H1 (cell line): ENCODE measurements at regions of chr5 and their contacts with region 1.

Region 1: DNA sequence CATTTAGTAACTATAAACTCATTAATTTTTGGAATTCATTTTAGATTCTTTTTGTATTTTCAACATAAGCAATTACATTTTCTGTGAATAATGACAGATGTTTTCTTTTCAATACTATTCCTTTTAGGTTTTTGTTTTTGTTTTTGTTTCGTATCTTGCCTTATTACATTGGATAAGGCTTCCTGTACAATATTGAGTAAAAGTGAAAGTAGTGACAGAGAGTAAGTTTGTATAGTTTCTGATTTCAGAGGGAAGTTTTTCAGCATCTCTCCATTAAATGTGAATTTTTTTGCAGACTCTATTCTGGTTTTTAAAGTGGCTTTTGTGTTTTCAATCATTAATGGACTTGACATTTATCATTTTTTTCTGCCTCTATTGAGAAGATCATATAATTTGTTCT is 12.8 kb upstream of the CAMK4 start:
- DNase-seq: no peak
- H3K4me3 ChIP-seq: no peak overlapping the region
- H3K27ac ChIP-seq: no peak overlapping the region
- H3K4me1 ChIP-seq: peaks cover 0 to 6% (median 3%) of the 10 kb centered on the region in 4 experiments; a peak in 4 of 7 replicates
- H3K27me3 ChIP-seq: no peaks in the 10 kb centered on the region
- CTCF ChIP-seq: no peak
- EP300 ChIP-seq: no peak
- POLR2A ChIP-seq: no peak
- RAD21 ChIP-seq: no peak

Region 2: GRCh38 chr5:111144352-111144930 is 66.9 kb before region 1 on chr5:
- CTCF ChIA-PET with region 1: no interaction called
- POLR2A ChIA-PET with region 1: no interaction called
- DNase-seq: no peak
- H3K4me3 ChIP-seq: no peak overlapping the region
- H3K27ac ChIP-seq: no peak overlapping the region
- H3K4me1 ChIP-seq: no peaks in the 10 kb centered on the region
- H3K27me3 ChIP-seq: no peaks in the 10 kb centered on the region
- CTCF ChIP-seq: no peak
- EP300 ChIP-seq: no peak
- POLR2A ChIP-seq: no peak
- RAD21 ChIP-seq: no peak

Region 3: GRCh38 chr5:111158105-111158744 is 53.1 kb before region 1 on chr5:
- CTCF ChIA-PET with region 1: no interaction called
- POLR2A ChIA-PET with region 1: no interaction called
- DNase-seq: peak; percentile 43 to 90
- H3K4me3 ChIP-seq: no peak overlapping the region
- H3K27ac ChIP-seq: no peak overlapping the region
- H3K4me1 ChIP-seq: no peaks in the 10 kb centered on the region
- H3K27me3 ChIP-seq: no peaks in the 10 kb centered on the region
- CTCF ChIP-seq: peak; percentile 53 to 98 (median 90)
- EP300 ChIP-seq: no peak
- POLR2A ChIP-seq: no peak
- RAD21 ChIP-seq: peak; percentile 96 to 99

Region 4: GRCh38 chr5:111223889-111224563 is 12.7 kb after region 1 on chr5 and contains the start of gene CAMK4:
- CTCF ChIA-PET with region 1: interaction called, 3 read pairs
- POLR2A ChIA-PET with region 1: interaction called, 12 read pairs
- DNase-seq: peak; percentile 38 to 80
- H3K4me3 ChIP-seq: peak within 1 kb of the TSS; percentile 77 to 100 (median 86)
- H3K27ac ChIP-seq: no peak within 1 kb of the TSS; the same call in 1 of the 2 replicates
- H3K4me1 ChIP-seq: peaks cover 0 to 7% (median 2%) of the 10 kb centered on the region in 4 experiments; a peak in 1 of 7 replicates
- H3K27me3 ChIP-seq: peaks cover 0 to 23% (median 5%) of the 10 kb centered on the region in 4 experiments; a peak in 4 of 7 replicates
- CTCF ChIP-seq: peak in 2 of 3 experiments; percentile 3 to 6; a peak in 2 of 4 replicates
- EP300 ChIP-seq: no peak
- POLR2A ChIP-seq: peak in 1 of 2 experiments; percentile 62; a peak in 1 of 3 replicates
- RAD21 ChIP-seq: no peak
- total RNA-seq, gene CAMK4: 6.3 and 8.3 TPM in 2 replicates

Region 5: DNA sequence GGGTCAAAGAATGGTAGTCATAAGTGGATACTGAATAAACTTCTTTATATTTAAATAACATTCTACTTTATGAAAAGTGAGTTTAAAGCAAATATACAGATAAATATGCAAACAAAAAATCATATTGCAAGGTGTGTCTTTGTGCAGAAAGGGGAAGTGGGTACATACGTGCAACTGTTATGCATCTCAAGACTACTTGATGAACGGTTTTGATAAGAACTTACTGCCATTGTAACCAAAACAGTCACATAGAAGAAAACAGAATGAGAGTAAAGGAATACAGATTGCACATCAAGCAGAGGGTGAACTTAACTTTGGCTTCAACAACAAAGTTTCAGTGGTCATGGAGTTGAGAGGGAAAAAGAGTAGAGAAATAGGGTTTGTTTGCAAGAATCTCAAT is 22.8 kb after region 1 on chr5:
- CTCF ChIA-PET with region 1: no interaction called
- POLR2A ChIA-PET with region 1: no interaction called
- DNase-seq: no peak
- H3K4me3 ChIP-seq: no peak overlapping the region
- H3K27ac ChIP-seq: no peak overlapping the region
- H3K4me1 ChIP-seq: no peaks in the 10 kb centered on the region
- H3K27me3 ChIP-seq: no peaks in the 10 kb centered on the region
- CTCF ChIP-seq: no peak
- EP300 ChIP-seq: no peak
- POLR2A ChIP-seq: no peak
- RAD21 ChIP-seq: no peak